AG04449 (cell line): ENCODE measurements at regions of chr9 and their contacts with region 1.

Region 1: DNA sequence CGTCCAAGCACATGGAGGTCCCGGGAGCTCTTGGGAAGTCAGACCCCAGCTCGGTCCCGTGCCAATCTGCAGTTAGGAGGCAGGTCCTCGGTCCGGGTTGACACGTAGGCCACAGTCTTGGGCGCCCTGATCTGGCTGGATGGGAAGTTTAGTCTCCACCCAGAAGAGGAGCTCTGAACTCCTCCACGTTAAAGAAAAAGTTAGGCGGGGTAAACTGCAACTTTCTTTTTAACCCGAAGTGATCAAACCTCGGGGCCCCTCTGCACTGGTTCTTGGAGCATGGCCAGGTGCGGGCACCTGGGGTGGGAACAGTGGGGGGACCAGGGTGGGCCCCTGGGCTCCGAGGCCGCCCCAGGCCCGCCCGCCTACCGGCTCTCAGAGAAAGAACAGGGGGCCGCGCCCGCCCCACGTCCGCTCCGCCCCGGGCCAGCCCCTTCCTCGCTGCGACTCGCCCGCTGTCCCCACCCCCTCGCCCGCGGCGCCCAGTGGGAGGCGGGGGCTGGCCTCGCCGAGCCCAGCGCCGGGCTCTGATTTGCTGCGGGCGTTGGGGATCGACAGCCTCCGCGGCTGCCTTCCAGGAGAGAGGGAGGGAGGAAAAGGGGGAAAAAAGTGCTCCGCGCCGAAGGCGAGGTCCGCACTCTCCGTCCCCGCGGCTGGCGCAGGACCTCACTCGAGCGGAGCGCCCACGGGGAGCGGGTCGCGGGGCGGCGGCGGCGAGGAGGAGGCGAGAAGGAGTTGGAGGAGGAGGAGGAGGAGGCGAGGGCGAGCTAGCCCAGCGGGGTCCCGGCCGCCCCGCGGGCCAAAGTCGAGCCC is at the start of gene COL5A1:
- DNase-seq: no peak
- H3K4me3 ChIP-seq: peak within 1 kb of the TSS; percentile 97
- CTCF ChIP-seq: peak; percentile 29

Region 2: GRCh38 chr9:134455934-134456739 is 185.2 kb before region 1 on chr9:
- CTCF ChIA-PET with region 1: interaction called, 13 read pairs
- POLR2A ChIA-PET with region 1: interaction called, 27 read pairs
- DNase-seq: peak; percentile 97
- H3K4me3 ChIP-seq: 0 out of 2 replicates have a peak overlapping the region, but pooled peaks have one; percentile 8
- CTCF ChIP-seq: no peak

Region 3: GRCh38 chr9:134492281-134492691 is 149.1 kb before region 1 on chr9:
- CTCF ChIA-PET with region 1: no interaction called
- POLR2A ChIA-PET with region 1: interaction called, 17 read pairs
- DNase-seq: peak; percentile 84
- H3K4me3 ChIP-seq: no peak overlapping the region
- CTCF ChIP-seq: no peak

Region 4: DNA sequence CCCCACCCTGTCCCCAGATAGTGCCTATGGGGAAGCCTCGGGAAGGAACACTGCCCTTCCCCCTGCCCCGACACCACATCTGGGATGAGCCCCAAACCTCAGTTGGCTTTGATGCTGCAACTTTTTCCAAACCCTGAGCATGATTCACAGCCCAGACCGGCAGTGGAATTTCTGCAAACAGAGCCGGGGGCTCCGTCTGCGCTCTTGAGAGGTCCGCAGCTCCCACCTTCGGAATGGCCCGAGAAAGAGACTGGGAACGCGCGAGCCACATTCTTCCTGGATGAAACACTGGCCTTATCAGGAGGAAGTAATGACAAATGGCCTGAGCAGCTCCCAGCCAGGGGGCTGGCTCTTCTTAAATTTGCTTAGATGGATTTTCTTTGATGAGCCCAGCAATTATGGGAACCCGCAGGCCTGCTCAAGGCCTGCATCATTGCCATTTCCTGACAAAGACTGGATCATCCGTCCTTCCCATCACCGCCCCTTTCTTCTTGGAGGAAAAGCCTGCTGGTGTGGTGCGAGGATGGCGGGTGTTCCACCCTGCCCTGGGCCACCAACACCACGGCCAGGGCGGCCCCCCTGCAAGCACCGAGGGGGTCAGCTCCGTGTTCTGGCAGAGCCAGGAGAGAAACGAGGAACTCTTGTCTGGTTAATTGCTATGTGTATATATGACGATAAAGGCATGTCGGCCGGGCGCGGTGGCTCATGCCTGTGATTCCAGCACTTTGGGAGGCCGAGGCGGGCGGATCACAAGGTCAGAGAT is 38.7 kb before region 1 on chr9:
- CTCF ChIA-PET with region 1: interaction called, 3 read pairs
- POLR2A ChIA-PET with region 1: interaction called, 18 read pairs
- DNase-seq: peak; percentile 97
- H3K4me3 ChIP-seq: no peak overlapping the region
- CTCF ChIP-seq: no peak

Region 5: GRCh38 chr9:134624827-134625181 is 16.6 kb before region 1 on chr9:
- CTCF ChIA-PET with region 1: interaction called, 24 read pairs
- POLR2A ChIA-PET with region 1: interaction called, 32 read pairs
- DNase-seq: peak; percentile 71
- H3K4me3 ChIP-seq: no peak overlapping the region
- CTCF ChIP-seq: no peak

Region 6: GRCh38 chr9:134660407-134660806 is 19.0 kb after region 1 on chr9:
- CTCF ChIA-PET with region 1: interaction called, 10 read pairs
- POLR2A ChIA-PET with region 1: interaction called, 23 read pairs
- DNase-seq: no peak
- H3K4me3 ChIP-seq: no peak overlapping the region
- CTCF ChIP-seq: peak; percentile 69

Region 7: DNA sequence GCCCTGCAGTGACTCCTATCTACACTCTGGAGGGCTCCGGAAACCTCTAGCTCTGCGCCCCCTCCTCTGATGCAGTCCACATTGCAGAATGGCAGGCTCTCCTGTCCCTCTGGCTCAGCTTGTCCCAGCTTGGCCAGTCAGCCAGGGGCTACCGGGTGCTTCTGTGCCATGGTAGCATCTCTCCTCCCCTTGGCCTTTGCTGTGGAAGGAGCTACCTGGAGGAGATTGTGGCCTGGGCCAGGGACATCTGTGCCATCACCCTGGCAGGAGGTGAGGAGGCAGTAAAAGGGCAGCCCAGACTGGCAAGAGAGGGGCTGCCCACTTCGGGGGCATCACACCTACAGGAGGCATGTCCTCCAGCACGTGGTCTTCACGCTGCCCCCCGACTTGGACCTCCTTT is 314.4 kb after region 1 on chr9:
- CTCF ChIA-PET with region 1: no interaction called
- POLR2A ChIA-PET with region 1: no interaction called
- DNase-seq: no peak
- H3K4me3 ChIP-seq: no peak overlapping the region
- CTCF ChIP-seq: no peak

Region 8: GRCh38 chr9:135156525-135157510 is 515.4 kb after region 1 on chr9:
- CTCF ChIA-PET with region 1: no interaction called
- POLR2A ChIA-PET with region 1: no interaction called
- DNase-seq: no peak
- H3K4me3 ChIP-seq: no peak overlapping the region
- CTCF ChIP-seq: no peak